Activated CD4-positive, alpha-beta memory T cell treated with anti-CD3 and anti-CD28 coated beads for 36 hours (primary cell): ENCODE measurements at regions of chr6 and their contacts with region 1.

Region 1: GRCh38 chr6:143575440-143575839 is 63.9 kb upstream of the FUCA2 start:
- DNase-seq: peak; percentile 56
- H3K4me3 Mint-ChIP-seq: no peak overlapping the region
- H3K27ac Mint-ChIP-seq: no peak overlapping the region
- H3K4me1 Mint-ChIP-seq: peaks cover 10% of the 10 kb centered on the region
- H3K27me3 Mint-ChIP-seq: no peaks in the 10 kb centered on the region

Region 2: GRCh38 chr6:143586557-143586956 is 11.1 kb after region 1 on chr6:
- CTCF ChIA-PET with region 1: interaction called, 12 read pairs
- POLR2A ChIA-PET with region 1: no interaction called
- intact Hi-C with region 1: no loop called
- DNase-seq: no peak
- H3K4me3 Mint-ChIP-seq: no peak overlapping the region
- H3K27ac Mint-ChIP-seq: no peak overlapping the region
- H3K4me1 Mint-ChIP-seq: peaks cover 5% of the 10 kb centered on the region
- H3K27me3 Mint-ChIP-seq: no peaks in the 10 kb centered on the region

Region 3: GRCh38 chr6:143726015-143726647 is 150.7 kb after region 1 on chr6:
- CTCF ChIA-PET with region 1: no interaction called
- POLR2A ChIA-PET with region 1: no interaction called
- intact Hi-C with region 1: no loop called
- DNase-seq: no peak
- H3K4me3 Mint-ChIP-seq: no peak overlapping the region
- H3K27ac Mint-ChIP-seq: no peak overlapping the region
- H3K4me1 Mint-ChIP-seq: peaks cover 21% of the 10 kb centered on the region
- H3K27me3 Mint-ChIP-seq: no peaks in the 10 kb centered on the region

Region 4: DNA sequence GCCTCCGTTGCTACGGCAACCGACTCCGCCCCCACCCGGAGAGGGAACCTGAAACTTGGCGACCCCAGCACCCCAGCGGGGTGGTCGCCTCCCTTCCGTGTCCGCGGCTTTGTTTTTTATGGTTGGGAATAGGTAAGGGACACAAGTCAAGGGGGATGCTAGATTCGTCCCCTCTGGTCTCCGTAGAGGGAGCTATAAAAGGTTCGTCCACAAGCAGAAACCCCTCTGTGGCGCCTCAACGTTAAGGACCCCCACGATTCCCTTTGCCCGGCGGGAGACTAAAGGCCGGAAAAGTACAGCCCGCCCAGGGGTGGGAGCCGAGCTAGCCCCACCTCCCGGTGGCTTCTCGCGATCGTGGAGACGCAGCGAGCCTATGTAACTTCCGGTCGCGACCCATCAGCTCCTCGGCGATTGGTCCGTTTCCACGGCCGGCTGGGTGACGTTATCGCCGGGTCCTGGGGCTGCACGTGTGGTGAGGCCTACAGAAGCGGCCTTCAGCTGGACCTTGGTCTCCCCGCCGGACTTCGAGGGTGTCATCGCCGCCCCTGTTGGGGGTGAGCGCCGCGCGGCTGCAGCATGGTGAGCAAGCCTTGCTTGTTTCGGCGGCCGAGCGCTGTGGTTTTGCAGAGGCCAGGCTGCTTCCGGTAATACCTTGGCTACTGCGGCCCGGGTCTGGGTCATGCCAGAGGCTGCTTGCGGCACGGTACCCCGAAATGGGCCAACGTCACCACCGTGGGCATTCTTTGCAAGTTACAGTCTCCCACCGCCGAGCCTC is 267.6 kb after region 1 on chr6 and contains the start of gene LTV1:
- CTCF ChIA-PET with region 1: interaction called, 33 read pairs
- POLR2A ChIA-PET with region 1: interaction called, 3 read pairs
- intact Hi-C with region 1: loop called (anchors 2 kb)
- DNase-seq: peak; percentile 96
- H3K4me3 Mint-ChIP-seq: peak within 1 kb of the TSS; percentile 93
- H3K27ac Mint-ChIP-seq: peak within 1 kb of the TSS; percentile 93
- H3K4me1 Mint-ChIP-seq: peaks cover 25% of the 10 kb centered on the region
- H3K27me3 Mint-ChIP-seq: no peaks in the 10 kb centered on the region
- total RNA-seq, gene LTV1: 33.5 to 35.4 TPM